ENCODE measurements at regions of chr12 and their contacts with region 1.

Region 1: DNA sequence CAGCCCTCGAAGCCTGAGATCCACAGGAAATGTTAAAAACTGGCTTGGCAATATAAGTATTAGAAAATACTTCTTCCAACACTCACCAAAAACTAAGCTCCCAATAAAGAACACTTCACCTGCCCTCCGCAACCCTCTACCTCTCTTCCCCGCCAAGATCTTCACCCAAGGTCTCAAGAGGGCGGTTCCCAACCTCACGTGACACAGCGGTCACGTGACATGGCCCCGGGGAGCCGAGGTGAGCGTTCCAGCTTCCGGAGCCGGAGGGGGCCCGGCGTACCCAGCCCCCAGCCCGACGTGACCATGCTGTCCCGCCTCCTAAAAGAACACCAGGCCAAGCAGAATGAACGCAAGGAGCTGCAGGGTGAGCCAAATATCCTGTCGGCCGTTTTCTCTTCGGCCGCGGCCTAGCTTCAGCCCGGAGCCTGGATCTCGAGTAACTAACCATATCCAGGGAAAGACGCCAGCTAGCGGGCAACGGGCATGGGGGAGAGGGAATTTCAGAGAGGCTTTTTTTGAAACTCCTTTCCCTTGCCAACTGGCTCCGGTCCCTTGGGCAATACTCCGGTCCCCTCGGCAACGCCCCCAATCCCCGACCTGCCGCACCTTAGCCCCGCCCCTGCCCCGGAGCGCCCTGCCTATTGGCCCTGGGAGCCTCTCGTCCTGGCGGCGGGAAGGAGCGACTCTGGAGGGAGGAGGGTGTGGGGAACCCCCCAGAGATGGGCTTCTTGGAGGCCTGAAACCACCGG is at the start of gene BLOC1S1:
- H3K4me3 ChIP-seq: peak within 1 kb of the TSS; percentile 83
- H3K27ac ChIP-seq: peak within 1 kb of the TSS; percentile 77
- H3K4me1 ChIP-seq: peaks cover 13% of the 10 kb centered on the region; the same call in 1 of the 2 replicates
- CTCF ChIP-seq: peak; percentile 34; the same call in 1 of the 2 replicates

Region 2: GRCh38 chr12:55728939-55729823 is 13.2 kb after region 1 on chr12 and contains the start of gene CD63:
- CTCF ChIA-PET with region 1: interaction called, 127 read pairs
- POLR2A ChIA-PET with region 1: interaction called, 17 read pairs
- H3K4me3 ChIP-seq: peak within 1 kb of the TSS; percentile 77
- H3K27ac ChIP-seq: peak within 1 kb of the TSS; percentile 91
- H3K4me1 ChIP-seq: no peaks in the 10 kb centered on the region; the same call in 1 of the 2 replicates
- CTCF ChIP-seq: no peak

Region 3: GRCh38 chr12:55926738-55927587 is 211.0 kb after region 1 on chr12:
- CTCF ChIA-PET with region 1: no interaction called
- POLR2A ChIA-PET with region 1: no interaction called
- H3K4me3 ChIP-seq: peak overlapping the region; percentile 80
- H3K27ac ChIP-seq: peak overlapping the region; percentile 94
- H3K4me1 ChIP-seq: peaks cover 4% of the 10 kb centered on the region; the same call in 1 of the 2 replicates
- CTCF ChIP-seq: peak; percentile 91

Measured in HEK293 (cell line).